SK-MEL-5 (cell line): ENCODE measurements at regions of chr20 and their contacts with region 1.

Region 1: GRCh38 chr20:8777911-8778310 is 291.0 kb upstream of the PLCB4 start:
- DNase-seq: no peak

Region 2: GRCh38 chr20:8602389-8603116 is 175.4 kb before region 1 on chr20:
- in situ Hi-C with region 1: no loop called
- DNase-seq: no peak

Region 3: GRCh38 chr20:9359561-9360308 is 581.8 kb after region 1 on chr20:
- in situ Hi-C with region 1: loop called (anchors 10 kb)
- DNase-seq: peak; percentile 78